Left cardiac atrium (tissue), 4 donors: ENCODE measurements at regions of chr4 and their contacts with region 1.

Region 1: GRCh38 chr4:168831919-168832762 is 177.9 kb downstream of the CBR4 start:
- DNase-seq: peak; percentile 84
- ATAC-seq: peak; percentile 86 to 92

Region 2: DNA sequence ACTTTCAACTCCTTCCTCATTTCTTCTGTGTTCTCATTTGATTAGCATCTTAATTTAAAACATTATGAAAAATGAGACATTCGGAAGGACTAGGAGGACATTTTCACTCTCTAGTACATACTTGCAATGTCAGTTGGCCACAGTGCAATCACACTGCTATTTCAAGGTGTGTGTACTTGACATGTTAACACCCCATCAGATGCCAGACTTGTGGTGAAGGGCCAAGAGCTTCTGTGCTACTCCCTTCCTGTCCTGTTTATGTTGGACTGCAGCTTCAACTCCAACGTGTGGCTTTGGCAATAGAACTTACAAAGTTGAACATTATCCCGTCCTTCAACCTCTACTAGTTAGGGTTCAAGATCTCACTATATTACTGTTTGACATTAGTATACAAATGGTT is 114.3 kb before region 1 on chr4:
- intact Hi-C with region 1: loop called in 1 of 2 experiments (anchors 5 kb)
- DNase-seq: peak; percentile 34
- ATAC-seq: peak; percentile 92 to 93

Region 3: GRCh38 chr4:168815379-168816345 is 16.5 kb before region 1 on chr4:
- intact Hi-C with region 1: loop called in 1 of 2 experiments (anchors 2 kb)
- DNase-seq: no peak
- ATAC-seq: no peak